ENCODE measurements at regions of chr1 and their contacts with region 1.

Region 1: GRCh38 chr1:52534928-52535764 is 17.7 kb downstream of the TUT4 start:
- DNase-seq: no peak
- ATAC-seq: no peak
- H3K4me3 Mint-ChIP-seq: no peak overlapping the region
- H3K27ac Mint-ChIP-seq: no peak overlapping the region
- H3K4me1 Mint-ChIP-seq: peaks cover 74% of the 10 kb centered on the region
- H3K27me3 Mint-ChIP-seq: no peaks in the 10 kb centered on the region
- CTCF ChIP-seq: no peak

Region 2: GRCh38 chr1:52677076-52677806 is 142.1 kb after region 1 on chr1:
- CTCF ChIA-PET with region 1: no interaction called
- POLR2A ChIA-PET with region 1: interaction called, 3 read pairs
- intact Hi-C with region 1: loop called (anchors 1 kb)
- DNase-seq: no peak
- ATAC-seq: no peak
- H3K4me3 Mint-ChIP-seq: no peak overlapping the region
- H3K27ac Mint-ChIP-seq: no peak overlapping the region
- H3K4me1 Mint-ChIP-seq: peaks cover 25% of the 10 kb centered on the region
- H3K27me3 Mint-ChIP-seq: no peaks in the 10 kb centered on the region
- CTCF ChIP-seq: no peak